H1 (cell line): ENCODE measurements at regions of chr1 and their contacts with region 1.

Region 1: GRCh38 chr1:28296401-28297261 is 32.2 kb upstream of the MED18 start:
- DNase-seq: peak; percentile 46 to 66
- H3K4me3 ChIP-seq: peak overlapping the region in 1 of 4 experiments; percentile 36; a peak in 2 of 8 replicates
- H3K27ac ChIP-seq: 0 out of 2 replicates have a peak overlapping the region, but pooled peaks have one; percentile 29
- H3K4me1 ChIP-seq: peaks cover 4 to 8% (median 6%) of the 10 kb centered on the region in 4 experiments
- H3K27me3 ChIP-seq: no peaks in the 10 kb centered on the region
- CTCF ChIP-seq: no peak
- EP300 ChIP-seq: peak in 1 of 2 experiments; percentile 87; a peak in 2 of 3 replicates
- POLR2A ChIP-seq: no peak; a peak in 1 of 3 replicates
- RAD21 ChIP-seq: no peak; a peak in 1 of 4 replicates

Region 2: DNA sequence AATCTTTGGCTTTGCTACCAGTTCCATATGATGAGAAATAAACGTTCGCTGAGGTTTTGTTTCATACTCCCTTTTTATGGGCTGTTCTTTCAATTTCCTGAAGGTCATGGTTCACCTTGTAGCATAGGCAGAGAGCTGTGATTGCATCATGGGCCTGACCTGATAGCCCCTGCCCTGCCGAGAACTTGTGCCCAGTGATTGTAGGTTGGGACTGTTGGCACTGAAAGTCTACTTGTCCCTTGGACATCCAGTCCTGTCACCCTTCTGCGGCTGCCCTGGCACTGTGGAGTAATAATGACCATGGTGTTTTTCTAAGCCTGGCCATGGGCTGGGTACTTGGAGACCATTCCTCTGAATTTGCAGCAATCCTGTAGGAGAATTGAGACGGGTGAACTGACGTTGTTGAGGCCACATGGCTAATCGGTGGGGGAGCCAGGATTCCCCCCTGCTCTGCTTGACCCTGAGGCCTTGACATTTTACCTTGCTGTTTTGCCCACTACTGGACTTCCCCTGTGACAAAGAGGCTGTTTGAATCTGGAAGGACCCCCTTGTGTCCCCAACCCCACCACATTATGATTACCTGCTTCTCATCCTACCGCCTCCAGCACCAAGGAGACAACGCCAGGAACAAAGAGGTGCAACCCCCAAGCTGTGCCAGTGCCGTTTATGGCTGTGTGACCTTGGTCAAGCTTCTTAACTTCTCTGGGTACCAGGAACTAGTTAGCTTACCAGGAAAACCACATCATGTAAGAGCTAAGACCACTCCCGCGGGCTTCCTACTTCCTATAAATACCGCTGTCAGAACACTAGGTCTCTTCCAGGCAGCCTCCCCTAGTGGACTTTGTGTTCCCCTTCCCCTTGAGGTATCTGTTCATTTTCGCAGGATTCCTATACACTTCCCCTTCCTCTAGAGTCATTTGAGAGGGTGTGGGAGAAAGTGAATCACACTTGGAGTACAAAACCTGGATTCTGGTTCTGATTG is 13.9 kb before region 1 on chr1:
- CTCF ChIA-PET with region 1: interaction called, 3 read pairs
- POLR2A ChIA-PET with region 1: interaction called, 38 read pairs
- DNase-seq: no peak
- H3K4me3 ChIP-seq: no peak overlapping the region
- H3K27ac ChIP-seq: peak overlapping the region; percentile 21; the same call in 1 of the 2 replicates
- H3K4me1 ChIP-seq: no peaks in the 10 kb centered on the region
- H3K27me3 ChIP-seq: no peaks in the 10 kb centered on the region
- CTCF ChIP-seq: no peak
- EP300 ChIP-seq: no peak
- POLR2A ChIP-seq: no peak
- RAD21 ChIP-seq: no peak

Region 3: GRCh38 chr1:28329395-28330153 is 32.9 kb after region 1 on chr1:
- CTCF ChIA-PET with region 1: interaction called, 4 read pairs
- POLR2A ChIA-PET with region 1: interaction called, 13 read pairs
- DNase-seq: peak in 1 of 2 experiments; percentile 56
- H3K4me3 ChIP-seq: peak overlapping the region; percentile 49 to 74 (median 72)
- H3K27ac ChIP-seq: peak overlapping the region; percentile 55; the same call in 1 of the 2 replicates
- H3K4me1 ChIP-seq: no peaks in the 10 kb centered on the region; a peak in 1 of 7 replicates
- H3K27me3 ChIP-seq: no peaks in the 10 kb centered on the region; a peak in 1 of 7 replicates
- CTCF ChIP-seq: peak in 2 of 3 experiments; percentile 6 to 22; a peak in 2 of 4 replicates
- EP300 ChIP-seq: no peak
- POLR2A ChIP-seq: no peak; a peak in 1 of 3 replicates
- RAD21 ChIP-seq: peak in 1 of 2 experiments; percentile 17; a peak in 1 of 4 replicates